ENCODE measurements at regions of chr14 and their contacts with region 1.

Region 1: DNA sequence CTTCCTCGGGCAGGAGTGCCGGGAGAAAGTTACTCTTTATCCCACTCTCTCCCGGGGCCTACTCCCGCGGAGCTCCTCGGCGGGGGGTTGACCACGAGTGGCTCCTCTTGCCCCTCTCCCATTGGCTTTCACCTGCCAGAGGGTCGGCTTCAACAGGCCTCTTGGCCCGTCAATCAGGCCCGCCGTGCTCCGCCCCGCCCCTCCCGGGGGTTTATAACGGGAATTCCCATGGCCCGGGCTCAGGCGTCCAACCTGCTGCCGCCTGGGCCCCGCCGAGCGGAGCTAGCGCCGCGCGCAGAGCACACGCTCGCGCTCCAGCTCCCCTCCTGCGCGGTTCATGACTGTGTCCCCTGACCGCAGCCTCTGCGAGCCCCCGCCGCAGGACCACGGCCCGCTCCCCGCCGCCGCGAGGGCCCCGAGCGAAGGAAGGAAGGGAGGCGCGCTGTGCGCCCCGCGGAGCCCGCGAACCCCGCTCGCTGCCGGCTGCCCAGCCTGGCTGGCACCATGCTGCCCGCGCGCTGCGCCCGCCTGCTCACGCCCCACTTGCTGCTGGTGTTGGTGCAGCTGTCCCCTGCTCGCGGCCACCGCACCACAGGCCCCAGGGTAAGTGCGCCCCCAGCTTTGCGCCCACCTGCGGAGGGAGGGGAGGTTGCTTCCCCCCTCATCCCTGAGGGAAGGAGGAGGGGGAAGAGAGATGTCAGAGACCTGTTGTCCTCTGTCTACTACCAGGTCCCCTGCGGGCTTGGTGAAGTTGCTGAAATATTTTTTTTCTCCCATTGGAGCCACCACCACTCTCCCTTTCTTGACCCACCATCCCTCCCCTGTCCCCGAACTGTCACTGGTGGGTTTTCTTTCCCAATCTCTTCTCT is at the start of gene SMOC1:
- DNase-seq: peak; percentile 31 to 88
- H3K4me3 ChIP-seq: peak within 1 kb of the TSS; percentile 66 to 81 (median 74)
- H3K27ac ChIP-seq: no peak within 1 kb of the TSS
- H3K4me1 ChIP-seq: peaks cover 0 to 6% (median 4%) of the 10 kb centered on the region in 4 experiments; a peak in 3 of 7 replicates
- H3K27me3 ChIP-seq: peaks cover 3 to 26% (median 21%) of the 10 kb centered on the region in 4 experiments; a peak in 6 of 7 replicates
- CTCF ChIP-seq: no peak
- EP300 ChIP-seq: no peak
- POLR2A ChIP-seq: no peak
- RAD21 ChIP-seq: no peak; a peak in 1 of 4 replicates
- total RNA-seq, gene SMOC1: 1.6 and 2.4 TPM in 2 replicates

Region 2: GRCh38 chr14:69673578-69674305 is 205.7 kb before region 1 on chr14:
- CTCF ChIA-PET with region 1: no interaction called
- POLR2A ChIA-PET with region 1: no interaction called
- DNase-seq: no peak
- H3K4me3 ChIP-seq: no peak overlapping the region
- H3K27ac ChIP-seq: no peak overlapping the region
- H3K4me1 ChIP-seq: peaks cover 0 to 5% (median 4%) of the 10 kb centered on the region in 4 experiments; a peak in 3 of 7 replicates
- H3K27me3 ChIP-seq: no peaks in the 10 kb centered on the region
- CTCF ChIP-seq: peak in 2 of 3 experiments; percentile 14 to 23; a peak in 3 of 4 replicates
- EP300 ChIP-seq: no peak
- POLR2A ChIP-seq: no peak
- RAD21 ChIP-seq: peak; percentile 10 to 40; a peak in 3 of 4 replicates

Region 3: DNA sequence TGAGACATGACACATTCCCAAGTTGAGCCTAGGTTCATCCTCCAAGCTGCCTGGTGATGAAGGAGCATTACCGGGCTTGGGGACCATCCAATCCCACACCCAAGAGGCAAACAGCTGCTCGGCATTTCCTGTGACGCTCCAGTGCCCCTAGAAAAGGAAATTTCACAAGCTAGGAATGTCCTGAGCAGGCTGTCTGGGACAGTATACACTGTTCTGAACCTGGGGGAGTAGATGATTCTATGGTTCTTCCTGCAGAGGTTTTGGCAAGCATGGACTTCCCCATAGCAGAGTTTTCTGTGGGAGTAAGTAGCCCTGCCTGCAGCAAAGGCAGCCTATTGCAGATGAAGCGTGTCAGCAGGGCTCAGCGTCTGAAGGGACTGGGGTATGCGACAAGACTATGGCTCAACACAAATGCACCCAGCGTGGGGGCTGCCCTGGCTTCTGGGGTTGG is 159.9 kb before region 1 on chr14:
- CTCF ChIA-PET with region 1: no interaction called
- POLR2A ChIA-PET with region 1: no interaction called
- DNase-seq: no peak
- H3K4me3 ChIP-seq: no peak overlapping the region
- H3K27ac ChIP-seq: no peak overlapping the region
- H3K4me1 ChIP-seq: peaks cover 2 to 10% (median 5%) of the 10 kb centered on the region in 4 experiments
- H3K27me3 ChIP-seq: no peaks in the 10 kb centered on the region
- CTCF ChIP-seq: no peak
- EP300 ChIP-seq: no peak
- POLR2A ChIP-seq: no peak
- RAD21 ChIP-seq: no peak

Region 4: GRCh38 chr14:69818757-69819191 is 60.6 kb before region 1 on chr14:
- CTCF ChIA-PET with region 1: interaction called, 27 read pairs
- POLR2A ChIA-PET with region 1: no interaction called
- DNase-seq: peak; percentile 51 to 79
- H3K4me3 ChIP-seq: no peak overlapping the region
- H3K27ac ChIP-seq: no peak overlapping the region
- H3K4me1 ChIP-seq: no peaks in the 10 kb centered on the region
- H3K27me3 ChIP-seq: no peaks in the 10 kb centered on the region
- CTCF ChIP-seq: peak; percentile 44 to 95 (median 81)
- EP300 ChIP-seq: peak in 1 of 2 experiments; percentile 48; a peak in 1 of 3 replicates
- POLR2A ChIP-seq: no peak
- RAD21 ChIP-seq: peak; percentile 98 to 99

Region 5: DNA sequence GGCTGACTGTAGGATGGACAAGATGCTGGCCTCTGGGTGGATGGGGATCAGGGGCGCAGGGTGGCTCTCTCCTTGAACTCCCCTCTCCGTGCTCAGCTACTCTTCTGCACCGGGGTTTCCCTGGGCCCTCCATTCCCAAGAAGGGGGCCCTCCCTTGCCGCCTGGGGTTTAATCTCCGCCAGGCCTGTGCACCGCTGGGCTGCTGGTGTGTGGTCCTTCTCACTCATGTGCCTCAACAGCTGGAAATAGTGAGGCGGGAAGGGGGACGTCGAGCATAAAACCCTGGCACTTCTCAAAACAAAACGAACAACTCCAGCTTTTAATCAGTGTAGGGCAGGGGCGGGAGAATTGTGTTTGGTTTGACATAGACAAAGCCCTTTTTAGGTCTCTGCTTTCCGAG is 19.2 kb before region 1 on chr14:
- CTCF ChIA-PET with region 1: interaction called, 15 read pairs
- POLR2A ChIA-PET with region 1: interaction called, 3 read pairs
- DNase-seq: peak in 1 of 2 experiments; percentile 48
- H3K4me3 ChIP-seq: no peak overlapping the region
- H3K27ac ChIP-seq: no peak overlapping the region
- H3K4me1 ChIP-seq: peaks cover 0 to 15% (median 10%) of the 10 kb centered on the region in 4 experiments; a peak in 4 of 7 replicates
- H3K27me3 ChIP-seq: peaks cover 0 to 4% (median 0%) of the 10 kb centered on the region in 4 experiments; a peak in 3 of 7 replicates
- CTCF ChIP-seq: no peak
- EP300 ChIP-seq: no peak
- POLR2A ChIP-seq: no peak
- RAD21 ChIP-seq: no peak

Region 6: DNA sequence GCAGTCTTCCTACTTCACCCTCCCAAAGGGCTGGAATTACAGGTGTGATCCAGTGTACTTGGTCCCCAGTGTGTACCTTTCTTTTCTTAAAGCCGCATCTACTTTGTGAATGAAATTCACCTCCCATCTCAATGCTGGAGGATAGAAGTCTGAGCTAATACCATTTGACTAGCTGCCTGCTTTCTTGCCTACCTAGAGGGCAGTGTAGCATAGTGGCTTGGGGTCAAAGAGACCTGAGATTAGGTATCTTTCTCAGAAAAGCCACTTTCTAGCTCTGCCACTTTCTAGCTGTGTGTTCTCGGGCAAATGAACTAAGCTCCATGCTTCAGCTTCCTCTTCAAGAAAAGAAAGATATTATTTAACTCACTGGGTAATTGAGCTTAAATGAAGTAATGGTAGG is 16.7 kb after region 1 on chr14:
- CTCF ChIA-PET with region 1: interaction called, 14 read pairs
- POLR2A ChIA-PET with region 1: interaction called, 3 read pairs
- DNase-seq: peak in 1 of 2 experiments; percentile 4
- H3K4me3 ChIP-seq: no peak overlapping the region
- H3K27ac ChIP-seq: no peak overlapping the region
- H3K4me1 ChIP-seq: no peaks in the 10 kb centered on the region
- H3K27me3 ChIP-seq: no peaks in the 10 kb centered on the region
- CTCF ChIP-seq: no peak; a peak in 1 of 4 replicates
- EP300 ChIP-seq: no peak
- POLR2A ChIP-seq: no peak
- RAD21 ChIP-seq: peak in 1 of 2 experiments; percentile 22; a peak in 1 of 4 replicates

Region 7: DNA sequence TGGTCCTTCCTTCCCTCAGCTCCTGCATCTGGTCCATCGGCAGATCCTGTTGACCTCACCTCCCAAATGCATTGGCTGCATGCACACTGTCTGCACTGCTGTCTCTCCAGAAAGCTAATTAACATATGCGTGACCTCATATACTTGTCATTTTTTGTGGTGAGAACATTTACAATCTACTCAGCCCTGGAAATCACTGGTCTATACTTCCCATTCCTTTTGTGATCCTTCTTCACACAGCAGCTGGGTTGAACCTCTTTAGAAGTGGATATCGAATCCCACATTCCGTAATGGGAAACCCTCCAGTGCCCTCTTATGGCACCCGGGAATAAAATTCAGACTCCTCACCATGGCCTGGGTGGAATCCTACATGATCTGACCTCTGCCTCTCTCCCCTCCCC is 44.8 kb after region 1 on chr14:
- CTCF ChIA-PET with region 1: interaction called, 12 read pairs
- POLR2A ChIA-PET with region 1: no interaction called
- DNase-seq: no peak
- H3K4me3 ChIP-seq: no peak overlapping the region
- H3K27ac ChIP-seq: no peak overlapping the region
- H3K4me1 ChIP-seq: no peaks in the 10 kb centered on the region
- H3K27me3 ChIP-seq: 0 out of 7 replicates have a peak, but pooled peaks cover 0 to 3% (median 0%) of the 10 kb centered on the region in 4 experiments
- CTCF ChIP-seq: no peak
- EP300 ChIP-seq: no peak
- POLR2A ChIP-seq: no peak
- RAD21 ChIP-seq: peak; percentile 2 to 29; a peak in 1 of 4 replicates

Region 8: GRCh38 chr14:70018713-70019211 is 139.4 kb after region 1 on chr14:
- CTCF ChIA-PET with region 1: interaction called, 37 read pairs
- POLR2A ChIA-PET with region 1: no interaction called
- DNase-seq: no peak
- H3K4me3 ChIP-seq: no peak overlapping the region
- H3K27ac ChIP-seq: no peak overlapping the region
- H3K4me1 ChIP-seq: no peaks in the 10 kb centered on the region; a peak in 1 of 7 replicates
- H3K27me3 ChIP-seq: no peaks in the 10 kb centered on the region
- CTCF ChIP-seq: no peak
- EP300 ChIP-seq: no peak
- POLR2A ChIP-seq: no peak
- RAD21 ChIP-seq: no peak